ENCODE measurements at regions of chr10 and their contacts with region 1.

Region 1: GRCh38 chr10:89426230-89426868 is 12.0 kb downstream of the IFIT5 start:
- DNase-seq: peak in 3 of 5 donors; percentile 21 to 35 (median 28)
- H3K4me3 ChIP-seq: no peak overlapping the region
- H3K4me3 Mint-ChIP-seq: no peak overlapping the region
- H3K27ac ChIP-seq: no peak overlapping the region
- H3K27ac Mint-ChIP-seq: no peak overlapping the region
- H3K4me1 ChIP-seq: no peaks in the 10 kb centered on the region
- H3K4me1 Mint-ChIP-seq: peaks cover 0 to 2% (median 1%) of the 10 kb centered on the region in 4 donors
- H3K27me3 ChIP-seq: no peaks in the 10 kb centered on the region
- H3K27me3 Mint-ChIP-seq: peaks cover 0 to 3% of the 10 kb centered on the region in 2 donors

Region 2: GRCh38 chr10:89563861-89564478 is 137.6 kb after region 1 on chr10:
- CTCF ChIA-PET with region 1: interaction called, 4 read pairs
- POLR2A ChIA-PET with region 1: no interaction called
- intact Hi-C with region 1: loop called (anchors 1 kb)
- DNase-seq: peak in 4 of 5 donors; percentile 40 to 48 (median 44)
- H3K4me3 ChIP-seq: no peak overlapping the region
- H3K4me3 Mint-ChIP-seq: no peak overlapping the region
- H3K27ac ChIP-seq: no peak overlapping the region
- H3K27ac Mint-ChIP-seq: no peak overlapping the region
- H3K4me1 ChIP-seq: no peaks in the 10 kb centered on the region
- H3K4me1 Mint-ChIP-seq: no peaks in the 10 kb centered on the region
- H3K27me3 ChIP-seq: no peaks in the 10 kb centered on the region
- H3K27me3 Mint-ChIP-seq: peaks cover 8 to 11% of the 10 kb centered on the region in 2 donors

Region 3: GRCh38 chr10:89744026-89744425 is 317.7 kb after region 1 on chr10:
- CTCF ChIA-PET with region 1: no interaction called
- POLR2A ChIA-PET with region 1: no interaction called
- intact Hi-C with region 1: no loop called
- DNase-seq: no peak
- H3K4me3 ChIP-seq: no peak overlapping the region
- H3K4me3 Mint-ChIP-seq: no peak overlapping the region
- H3K27ac ChIP-seq: no peak overlapping the region
- H3K27ac Mint-ChIP-seq: no peak overlapping the region
- H3K4me1 ChIP-seq: no peaks in the 10 kb centered on the region
- H3K4me1 Mint-ChIP-seq: peaks cover 0 to 1% (median under 1%) of the 10 kb centered on the region in 4 donors
- H3K27me3 ChIP-seq: no peaks in the 10 kb centered on the region
- H3K27me3 Mint-ChIP-seq: no peaks in the 10 kb centered on the region

Region 4: GRCh38 chr10:90319188-90319914 is 893.0 kb after region 1 on chr10:
- CTCF ChIA-PET with region 1: no interaction called
- POLR2A ChIA-PET with region 1: no interaction called
- intact Hi-C with region 1: no loop called
- DNase-seq: no peak
- H3K4me3 ChIP-seq: no peak overlapping the region
- H3K4me3 Mint-ChIP-seq: no peak overlapping the region
- H3K27ac ChIP-seq: no peak overlapping the region
- H3K27ac Mint-ChIP-seq: no peak overlapping the region
- H3K4me1 ChIP-seq: no peaks in the 10 kb centered on the region
- H3K4me1 Mint-ChIP-seq: no peaks in the 10 kb centered on the region
- H3K27me3 ChIP-seq: no peaks in the 10 kb centered on the region
- H3K27me3 Mint-ChIP-seq: peaks cover 0 to 2% of the 10 kb centered on the region in 2 donors

Region 5: DNA sequence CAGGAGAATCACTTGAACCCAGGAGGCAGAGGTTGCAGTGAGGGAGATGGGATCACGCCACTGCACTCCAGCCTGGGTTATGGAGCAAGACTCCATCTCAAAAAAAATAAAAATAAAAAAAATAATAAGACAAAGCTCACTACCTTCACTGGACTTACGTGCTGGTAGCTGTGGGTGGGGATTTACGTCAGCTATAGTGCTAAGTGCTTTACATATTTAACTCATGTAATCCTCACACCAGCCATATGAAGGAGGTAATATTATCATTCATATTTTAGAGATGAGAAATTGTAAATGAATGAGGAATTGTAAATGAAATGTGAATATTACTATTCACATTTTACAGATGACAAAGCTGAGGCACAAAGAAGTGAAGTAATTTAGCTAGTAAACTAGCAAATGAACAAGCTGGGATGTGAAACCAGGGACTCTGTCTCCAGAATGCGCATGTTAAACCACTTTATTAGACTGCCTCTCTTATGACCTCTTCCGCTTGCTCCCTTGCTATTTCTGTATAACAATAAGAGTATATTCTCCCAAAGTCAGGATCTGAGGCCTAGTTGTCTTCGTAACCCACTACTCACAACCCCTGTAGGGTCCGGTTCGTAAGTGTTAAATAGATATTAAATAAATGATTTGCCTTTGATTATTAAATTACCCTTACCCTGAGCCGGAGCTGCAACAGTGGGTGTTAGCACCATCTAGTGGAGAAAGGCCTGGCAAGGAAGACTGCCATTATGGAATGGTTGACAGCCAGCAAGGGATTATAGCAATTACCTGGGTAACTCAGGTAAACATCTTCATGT is 1361.2 kb after region 1 on chr10:
- CTCF ChIA-PET with region 1: interaction called, 3 read pairs
- POLR2A ChIA-PET with region 1: no interaction called
- intact Hi-C with region 1: loop called (anchors 5 kb)
- DNase-seq: peak in 4 of 5 donors; percentile 7 to 29 (median 22)
- H3K4me3 ChIP-seq: no peak overlapping the region
- H3K4me3 Mint-ChIP-seq: no peak overlapping the region
- H3K27ac ChIP-seq: no peak overlapping the region
- H3K27ac Mint-ChIP-seq: no peak overlapping the region
- H3K4me1 ChIP-seq: no peaks in the 10 kb centered on the region
- H3K4me1 Mint-ChIP-seq: no peaks in the 10 kb centered on the region
- H3K27me3 ChIP-seq: no peaks in the 10 kb centered on the region
- H3K27me3 Mint-ChIP-seq: peaks cover 8% of the 10 kb centered on the region in 2 donors

Measured in CD4-positive, alpha-beta memory T cell (primary cell).